Activated CD4-positive, alpha-beta T cell treated with anti-CD3 and anti-CD28 coated beads, Interleukin-2, amount 10 ng/mL, durations not matched to agents 7 days and 5 days (primary cell): ENCODE measurements at regions of chr4 and their contacts with region 1.

Region 1: DNA sequence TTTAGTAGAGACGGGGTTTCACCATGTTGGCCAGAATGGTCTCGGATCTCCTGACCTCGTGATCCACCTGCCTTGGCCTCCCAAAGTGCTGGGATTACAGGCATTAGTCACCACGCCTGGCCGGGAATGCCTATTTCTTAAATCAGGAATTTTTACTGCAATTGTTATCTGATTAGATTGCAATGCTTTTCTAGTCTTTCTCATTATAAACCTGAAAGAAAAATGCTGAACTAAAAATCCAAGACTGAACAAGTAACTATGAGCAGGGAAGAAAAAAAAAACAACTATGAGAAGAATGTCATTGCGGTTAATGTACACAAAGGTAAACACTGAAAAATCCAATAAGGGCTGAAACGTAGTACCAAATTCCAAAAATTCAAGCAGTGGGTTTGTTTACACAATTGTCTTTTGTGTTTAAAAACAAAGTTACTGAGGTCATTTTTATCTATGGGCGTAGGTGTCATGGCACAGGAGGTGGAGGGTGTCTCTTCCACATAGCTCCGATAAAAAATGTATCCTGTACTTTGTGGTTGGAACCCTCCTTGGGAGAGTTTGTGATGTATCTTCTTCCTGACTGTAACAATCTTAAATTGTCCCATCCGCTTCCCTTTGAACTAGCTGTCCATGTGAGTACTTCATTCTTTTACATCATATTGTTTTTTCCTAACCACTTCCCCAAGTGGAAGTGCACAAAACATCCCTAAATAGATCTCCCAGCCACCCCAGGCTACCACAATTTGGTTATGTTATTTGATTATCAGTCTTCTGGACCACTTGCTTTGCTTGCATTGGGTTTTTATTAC is 11.1 kb upstream of the TMEM156 start:
- DNase-seq: no peak
- H3K4me3 Mint-ChIP-seq: peak overlapping the region; percentile 85
- H3K27ac Mint-ChIP-seq: peak overlapping the region; percentile 93
- H3K4me1 Mint-ChIP-seq: peaks cover 43% of the 10 kb centered on the region
- H3K27me3 Mint-ChIP-seq: no peaks in the 10 kb centered on the region

Region 2: GRCh38 chr4:39029752-39030694 is 13.2 kb before region 1 on chr4:
- CTCF ChIA-PET with region 1: interaction called, 10 read pairs
- POLR2A ChIA-PET with region 1: interaction called, 3 read pairs
- DNase-seq: peak; percentile 28
- H3K4me3 Mint-ChIP-seq: peak overlapping the region; percentile 75
- H3K27ac Mint-ChIP-seq: peak overlapping the region; percentile 95
- H3K4me1 Mint-ChIP-seq: peaks cover 50% of the 10 kb centered on the region
- H3K27me3 Mint-ChIP-seq: no peaks in the 10 kb centered on the region

Region 3: GRCh38 chr4:39067451-39067850 is 24.2 kb after region 1 on chr4:
- CTCF ChIA-PET with region 1: no interaction called
- POLR2A ChIA-PET with region 1: no interaction called
- DNase-seq: no peak
- H3K4me3 Mint-ChIP-seq: no peak overlapping the region
- H3K27ac Mint-ChIP-seq: no peak overlapping the region
- H3K4me1 Mint-ChIP-seq: peaks cover 2% of the 10 kb centered on the region
- H3K27me3 Mint-ChIP-seq: no peaks in the 10 kb centered on the region

Region 4: GRCh38 chr4:39718366-39719323 is 675.4 kb after region 1 on chr4:
- CTCF ChIA-PET with region 1: no interaction called
- POLR2A ChIA-PET with region 1: no interaction called
- DNase-seq: no peak
- H3K4me3 Mint-ChIP-seq: no peak overlapping the region
- H3K27ac Mint-ChIP-seq: peak overlapping the region; percentile 2
- H3K4me1 Mint-ChIP-seq: peaks cover 51% of the 10 kb centered on the region
- H3K27me3 Mint-ChIP-seq: no peaks in the 10 kb centered on the region